Activated T-helper 1 cell treated with anti-CD3 and anti-CD28 coated beads, Interleukin-12 subunit alpha, Interleukin-12 subunit beta, Interleukin-2, Interleukin-4 antibody, amounts not matched to agents 30 ng/mL and 10 ng/mL and 1 ng/mL, durations not matched to agents 14 hours and 24 hours and 36 hours (primary cell): ENCODE measurements at regions of chr10 and their contacts with region 1.

Region 1: DNA sequence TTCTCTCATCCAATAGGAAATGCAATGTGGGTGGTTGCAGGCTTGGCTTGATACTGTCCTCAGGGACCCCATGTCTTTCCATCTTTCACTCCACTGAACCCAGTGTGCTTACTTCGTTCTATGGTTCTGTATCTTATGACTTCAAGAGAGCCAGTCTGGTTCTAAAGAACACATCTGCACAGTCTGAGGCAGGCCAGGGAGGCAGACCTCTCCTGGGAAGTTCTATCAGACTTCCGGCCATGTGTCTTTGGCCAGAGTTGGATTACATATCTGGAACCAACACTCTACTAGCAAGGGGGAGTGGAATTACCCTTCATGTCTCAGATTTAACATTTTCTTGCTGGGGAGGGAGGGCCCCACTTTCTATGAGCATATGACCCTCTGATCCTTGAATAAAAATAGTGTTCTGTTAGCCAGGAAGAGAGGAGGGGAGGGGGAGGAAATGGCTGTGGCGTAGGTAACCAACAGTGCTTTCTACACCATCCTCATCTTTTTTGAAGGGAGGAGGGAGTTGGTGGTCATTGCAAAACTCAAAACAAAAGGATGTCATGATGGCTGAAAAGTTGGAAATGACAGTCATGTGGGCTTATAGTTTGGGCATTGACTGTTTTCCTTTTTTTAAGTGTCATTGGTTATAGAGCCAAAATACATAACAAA is 370.2 kb downstream of the GATA3 start:
- DNase-seq: no peak
- H3K4me3 Mint-ChIP-seq: no peak overlapping the region
- H3K27ac Mint-ChIP-seq: no peak overlapping the region
- H3K4me1 Mint-ChIP-seq: peaks cover 13% of the 10 kb centered on the region
- H3K27me3 Mint-ChIP-seq: peaks cover 6% of the 10 kb centered on the region

Region 2: DNA sequence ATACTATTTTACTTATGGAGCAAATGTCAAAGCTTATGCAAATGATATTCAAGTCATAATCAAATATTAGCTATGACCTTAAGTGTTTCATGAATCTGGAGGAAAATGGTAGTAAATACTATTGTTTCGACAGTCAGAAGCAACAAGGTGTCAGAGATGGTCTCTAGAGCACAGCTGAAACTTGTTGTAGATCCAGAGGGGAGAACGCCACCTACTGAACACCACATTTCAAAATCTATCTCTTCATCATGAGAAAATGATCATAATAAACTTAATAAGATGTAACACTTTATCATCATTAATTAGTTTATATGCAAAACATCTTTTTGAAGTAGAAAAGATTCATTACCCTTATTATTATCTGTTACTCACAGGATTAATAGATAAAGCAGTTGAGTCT is 48.5 kb after region 1 on chr10:
- intact Hi-C with region 1: loop called (anchors 5 kb)
- DNase-seq: peak; percentile 5
- H3K4me3 Mint-ChIP-seq: no peak overlapping the region
- H3K27ac Mint-ChIP-seq: no peak overlapping the region
- H3K4me1 Mint-ChIP-seq: peaks cover 8% of the 10 kb centered on the region
- H3K27me3 Mint-ChIP-seq: peaks cover 33% of the 10 kb centered on the region